IMR-90 (cell line): ENCODE measurements at regions of chr4 and their contacts with region 1.

Region 1: DNA sequence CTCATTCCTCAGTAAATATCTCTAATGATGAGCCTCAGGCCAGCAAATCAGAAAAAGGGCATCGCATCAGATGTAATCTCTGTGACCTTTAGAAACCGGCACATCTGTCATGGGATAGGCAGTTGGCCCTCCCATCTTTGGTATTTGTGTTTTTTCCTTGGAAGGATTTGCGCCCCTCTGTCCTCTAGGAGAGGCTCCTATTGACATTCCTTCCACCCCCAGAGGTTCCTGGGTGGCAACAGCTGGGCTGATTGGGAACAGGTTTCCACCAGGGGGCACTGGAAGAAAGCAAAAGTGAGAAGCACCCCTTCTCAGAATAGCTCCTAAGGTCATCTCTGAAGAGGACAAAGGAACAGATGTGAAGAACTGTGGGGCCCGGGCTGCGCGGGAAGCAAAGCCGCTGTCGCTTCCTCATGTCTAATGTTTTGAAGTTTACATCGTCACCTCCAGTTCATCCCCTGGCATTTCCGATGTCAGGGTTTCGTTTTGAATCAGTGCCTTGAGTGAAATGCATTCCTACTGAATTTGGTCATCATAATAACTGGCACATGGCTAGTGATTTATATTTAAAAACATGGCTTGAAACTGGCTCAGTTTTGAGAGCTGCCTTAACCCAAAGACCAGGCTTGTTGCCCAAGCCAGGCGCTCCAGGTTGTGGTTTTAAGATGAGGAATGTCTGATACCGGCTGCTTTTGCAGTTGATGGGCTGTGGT is 6.2 kb downstream of the TXK start:
- DNase-seq: peak; percentile 94
- ATAC-seq: peak; percentile 87
- H3K4me3 ChIP-seq: no peak overlapping the region
- H3K27ac ChIP-seq: peak overlapping the region; percentile 5; the same call in 1 of the 2 replicates
- H3K4me1 ChIP-seq: peaks cover 1% of the 10 kb centered on the region; the same call in 1 of the 2 replicates
- H3K27me3 ChIP-seq: peaks cover under 1% of the 10 kb centered on the region; the same call in 1 of the 2 replicates
- CTCF ChIP-seq: peak; percentile 55
- POLR2A ChIP-seq: no peak
- RAD21 ChIP-seq: peak; percentile 59

Region 2: DNA sequence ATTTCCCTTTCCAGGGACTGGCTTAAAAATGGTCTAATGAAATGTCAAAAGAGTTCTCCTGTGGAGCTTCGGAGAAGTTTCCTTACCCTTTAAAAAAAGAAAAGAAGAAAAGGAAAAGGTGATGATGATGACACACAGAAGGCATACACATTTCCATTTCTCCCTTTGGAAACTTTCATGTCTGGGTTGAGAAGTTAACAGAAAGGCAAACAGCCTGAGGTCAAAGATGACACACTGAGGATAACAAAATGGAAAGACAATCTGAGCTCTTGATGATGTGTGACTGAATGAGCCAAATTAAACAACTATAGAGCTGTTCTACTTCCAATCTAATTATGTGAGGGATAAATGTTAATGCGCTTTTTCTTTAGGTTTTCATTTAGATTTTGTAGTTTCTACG is 245.6 kb before region 1 on chr4:
- CTCF ChIA-PET with region 1: no interaction called
- POLR2A ChIA-PET with region 1: no interaction called
- dilution Hi-C with region 1: no loop called
- in situ Hi-C with region 1: no loop called
- intact Hi-C with region 1: no loop called
- DNase-seq: peak; percentile 33
- ATAC-seq: peak; percentile 77
- H3K4me3 ChIP-seq: no peak overlapping the region
- H3K27ac ChIP-seq: peak overlapping the region; percentile 1; the same call in 1 of the 2 replicates
- H3K4me1 ChIP-seq: peaks cover 2% of the 10 kb centered on the region; the same call in 1 of the 2 replicates
- H3K27me3 ChIP-seq: no peaks in the 10 kb centered on the region
- CTCF ChIP-seq: no peak
- POLR2A ChIP-seq: no peak
- RAD21 ChIP-seq: no peak

Region 3: DNA sequence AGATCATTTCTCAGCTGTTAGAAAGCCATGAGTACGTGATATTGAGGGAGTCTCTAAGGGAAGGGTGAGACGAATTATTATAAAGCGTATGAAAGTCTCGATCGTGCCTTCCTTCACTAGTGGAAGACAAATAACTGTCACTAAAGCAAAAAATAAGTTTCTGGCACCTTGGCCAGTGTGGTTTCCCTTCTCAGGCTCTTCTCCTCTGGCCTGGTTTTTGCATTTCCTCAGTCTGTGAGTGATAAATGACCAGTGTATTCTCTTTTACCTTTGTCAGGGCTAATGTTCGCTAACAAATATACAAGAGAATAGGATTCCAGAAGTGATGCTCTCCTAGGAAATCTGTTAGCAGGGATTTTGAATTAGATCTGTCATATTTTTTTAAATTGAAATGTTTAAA is 13.4 kb before region 1 on chr4:
- CTCF ChIA-PET with region 1: interaction called, 4 read pairs
- POLR2A ChIA-PET with region 1: no interaction called
- dilution Hi-C with region 1: no loop called
- in situ Hi-C with region 1: no loop called
- intact Hi-C with region 1: loop called (anchors 1 kb)
- DNase-seq: no peak
- ATAC-seq: no peak
- H3K4me3 ChIP-seq: no peak overlapping the region
- H3K27ac ChIP-seq: no peak overlapping the region
- H3K4me1 ChIP-seq: no peaks in the 10 kb centered on the region
- H3K27me3 ChIP-seq: peaks cover 3% of the 10 kb centered on the region
- CTCF ChIP-seq: no peak
- POLR2A ChIP-seq: no peak
- RAD21 ChIP-seq: no peak

Region 4: DNA sequence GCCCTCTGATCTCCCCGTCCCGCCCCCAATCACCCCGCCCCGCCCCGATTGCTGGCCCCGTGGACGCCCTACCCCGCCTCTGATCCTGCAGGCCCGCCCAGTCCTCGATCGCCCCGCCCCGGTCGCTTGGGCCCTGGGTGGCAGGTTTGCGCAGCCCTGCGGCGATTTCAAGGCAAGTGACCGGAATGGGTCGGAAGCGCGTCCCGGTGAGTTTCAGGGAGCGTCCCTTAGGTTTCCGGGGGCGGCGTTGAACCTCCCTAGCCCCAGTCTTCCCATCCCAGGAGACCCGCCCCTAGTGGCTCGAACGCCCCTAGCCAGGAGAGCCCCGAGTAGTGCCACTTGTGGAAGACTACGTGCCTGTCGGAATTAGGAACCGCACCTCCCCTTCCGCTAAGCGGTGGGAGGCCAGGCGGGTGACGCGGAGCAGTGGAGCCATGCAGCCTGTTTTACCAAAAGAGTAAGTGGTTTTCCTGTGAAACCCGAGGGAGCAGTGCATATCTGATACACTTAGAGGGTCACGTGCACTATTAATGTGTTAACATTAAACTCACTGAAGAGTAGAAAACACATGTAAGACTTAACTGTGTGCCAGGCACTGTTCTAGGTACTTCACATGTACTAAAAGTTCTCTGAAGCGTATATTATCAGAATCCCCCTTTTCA is 142.2 kb after region 1 on chr4:
- CTCF ChIA-PET with region 1: no interaction called
- POLR2A ChIA-PET with region 1: no interaction called
- dilution Hi-C with region 1: no loop called
- in situ Hi-C with region 1: no loop called
- intact Hi-C with region 1: loop called (anchors 5 kb)
- DNase-seq: peak; percentile 51
- ATAC-seq: peak; percentile 97
- H3K4me3 ChIP-seq: peak overlapping the region; percentile 97
- H3K27ac ChIP-seq: peak overlapping the region; percentile 65
- H3K4me1 ChIP-seq: no peaks in the 10 kb centered on the region
- H3K27me3 ChIP-seq: no peaks in the 10 kb centered on the region
- CTCF ChIP-seq: no peak
- POLR2A ChIP-seq: no peak
- RAD21 ChIP-seq: no peak